ENCODE measurements at regions of chr15 and their contacts with region 1.

Region 1: DNA sequence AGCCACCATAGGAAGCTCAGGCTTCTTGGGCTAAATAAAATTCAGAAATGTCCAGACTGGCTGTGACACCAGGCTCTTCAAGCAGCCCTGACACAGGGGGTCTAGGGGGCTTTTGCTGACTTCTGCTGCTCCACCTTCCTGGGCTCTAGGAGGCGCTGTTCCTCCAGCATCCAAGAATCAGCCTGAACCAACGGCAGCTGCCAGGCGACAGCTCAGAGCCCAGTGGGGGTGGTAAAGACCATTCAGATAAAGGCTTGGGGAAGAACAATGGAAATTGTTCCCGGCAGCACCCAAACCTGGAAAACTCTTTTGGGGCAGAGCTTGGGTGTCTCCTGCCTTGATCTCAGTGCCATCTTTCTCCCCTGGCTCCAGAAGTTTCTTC is 21.6 kb upstream of the PSTPIP1 start:
- DNase-seq: peak; percentile 86
- ATAC-seq: peak; percentile 81
- H3K4me3 Mint-ChIP-seq: no peak overlapping the region
- H3K27ac Mint-ChIP-seq: no peak overlapping the region
- H3K4me1 Mint-ChIP-seq: peaks cover 17% of the 10 kb centered on the region
- H3K27me3 Mint-ChIP-seq: no peaks in the 10 kb centered on the region

Region 2: GRCh38 chr15:76941636-76942035 is 31.7 kb before region 1 on chr15:
- CTCF ChIA-PET with region 1: interaction called, 14 read pairs
- POLR2A ChIA-PET with region 1: no interaction called
- intact Hi-C with region 1: no loop called
- DNase-seq: no peak
- ATAC-seq: no peak
- H3K4me3 Mint-ChIP-seq: no peak overlapping the region
- H3K27ac Mint-ChIP-seq: no peak overlapping the region
- H3K4me1 Mint-ChIP-seq: peaks cover 8% of the 10 kb centered on the region
- H3K27me3 Mint-ChIP-seq: no peaks in the 10 kb centered on the region

Region 3: DNA sequence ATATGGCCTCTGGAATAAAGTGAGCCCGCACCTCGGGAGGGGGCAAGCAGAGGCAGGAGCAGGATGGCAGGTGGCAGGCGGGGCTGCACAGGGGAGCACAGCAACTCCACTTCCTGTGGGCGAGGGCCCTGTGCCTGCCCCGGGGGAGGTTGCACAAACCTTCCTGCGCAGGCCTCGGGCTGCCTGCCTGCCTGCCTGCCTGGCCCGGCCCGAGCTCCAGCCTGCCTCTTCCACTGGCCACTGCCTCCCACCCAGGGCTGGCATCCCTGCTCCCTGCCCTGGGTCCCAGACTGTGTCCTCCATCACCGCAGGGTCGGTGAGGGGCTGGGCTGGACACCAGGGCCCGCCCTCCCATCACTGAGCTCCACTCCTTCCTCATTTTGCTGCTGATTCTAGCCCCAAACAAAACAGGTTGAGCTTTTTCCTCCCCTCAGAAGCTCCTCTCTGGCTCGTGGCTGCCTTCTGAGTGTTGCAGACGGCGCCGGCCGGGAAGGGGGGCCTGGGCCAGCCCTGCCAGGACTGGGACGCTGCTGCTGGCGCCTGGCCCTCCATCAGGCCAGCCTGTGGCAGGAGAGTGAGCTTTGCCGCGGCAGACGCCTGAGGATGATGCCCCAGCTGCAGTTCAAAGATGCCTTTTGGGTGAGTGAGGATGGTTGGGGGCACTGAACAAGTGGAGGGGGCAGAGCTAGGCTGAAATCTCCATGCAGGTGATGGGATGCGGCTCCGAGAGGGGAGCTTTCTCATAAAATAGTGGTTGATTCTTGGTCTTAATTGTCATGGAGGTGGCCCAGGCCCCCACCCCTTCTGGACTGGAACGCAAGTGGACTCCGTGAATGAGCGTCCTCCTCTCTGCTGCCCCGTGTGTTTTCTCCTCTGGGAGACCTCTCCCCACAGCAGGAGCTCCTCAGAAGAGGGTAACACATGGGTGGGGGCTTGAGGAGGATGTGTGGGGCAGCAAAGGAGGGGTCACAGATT is 21.9 kb after region 1 on chr15 and contains the start of gene PSTPIP1:
- CTCF ChIA-PET with region 1: interaction called, 33 read pairs
- POLR2A ChIA-PET with region 1: no interaction called
- intact Hi-C with region 1: loop called in 1 of 2 experiments (anchors 1 kb)
- DNase-seq: peak; percentile 87
- ATAC-seq: peak; percentile 62
- H3K4me3 Mint-ChIP-seq: peak within 1 kb of the TSS; percentile 97
- H3K27ac Mint-ChIP-seq: peak within 1 kb of the TSS; percentile 96
- H3K4me1 Mint-ChIP-seq: peaks cover 57% of the 10 kb centered on the region
- H3K27me3 Mint-ChIP-seq: no peaks in the 10 kb centered on the region
- total RNA-seq, gene PSTPIP1: 100 to 125 TPM

Region 4: DNA sequence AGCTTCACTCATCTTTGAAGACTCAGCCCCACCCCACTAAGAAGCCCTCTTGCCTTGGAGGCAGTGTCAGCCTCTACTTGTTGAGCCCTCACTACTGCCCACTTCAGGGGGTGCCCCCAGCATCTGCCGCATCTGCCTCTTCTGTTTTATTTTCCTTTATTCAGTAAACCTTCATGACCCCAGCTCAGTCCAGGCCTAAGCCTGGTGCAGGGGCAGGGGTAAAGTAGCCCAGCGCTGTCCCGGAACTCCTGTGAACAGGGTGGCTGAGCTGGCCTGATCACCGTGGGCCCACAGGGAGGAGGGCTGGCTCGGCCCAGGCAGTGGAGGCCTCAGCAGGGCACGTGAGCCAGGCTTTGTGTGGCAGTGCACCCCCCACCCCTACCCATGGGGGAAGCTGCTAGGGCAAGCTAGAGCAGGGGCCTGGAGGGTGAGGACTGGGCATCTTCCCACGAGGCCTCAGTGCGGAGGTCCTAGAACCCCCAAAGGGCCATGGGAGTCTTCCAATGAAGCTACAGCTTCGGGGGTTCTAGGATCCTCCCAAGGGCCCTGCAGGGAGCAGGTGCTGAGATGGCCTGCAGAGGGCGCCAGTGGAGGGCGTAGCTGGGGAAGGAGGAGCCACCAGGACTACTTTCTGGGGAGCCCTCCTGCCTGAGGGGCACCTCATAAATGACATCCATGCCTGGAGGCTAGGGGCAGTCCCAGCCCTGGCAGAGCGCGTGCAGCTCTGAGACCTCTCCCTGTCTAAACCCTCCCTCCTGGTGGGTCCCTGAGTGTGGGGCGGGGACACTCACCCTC is 61.5 kb after region 1 on chr15:
- CTCF ChIA-PET with region 1: interaction called, 44 read pairs
- POLR2A ChIA-PET with region 1: no interaction called
- intact Hi-C with region 1: loop called in 1 of 2 experiments (anchors 1 kb)
- DNase-seq: peak; percentile 80
- ATAC-seq: peak; percentile 61
- H3K4me3 Mint-ChIP-seq: no peak overlapping the region
- H3K27ac Mint-ChIP-seq: no peak overlapping the region
- H3K4me1 Mint-ChIP-seq: no peaks in the 10 kb centered on the region
- H3K27me3 Mint-ChIP-seq: no peaks in the 10 kb centered on the region

Region 5: GRCh38 chr15:77118882-77119321 is 145.5 kb after region 1 on chr15:
- CTCF ChIA-PET with region 1: interaction called, 6 read pairs
- POLR2A ChIA-PET with region 1: no interaction called
- intact Hi-C with region 1: loop called in 1 of 2 experiments (anchors 1 kb)
- DNase-seq: peak; percentile 39
- ATAC-seq: peak; percentile 47
- H3K4me3 Mint-ChIP-seq: no peak overlapping the region
- H3K27ac Mint-ChIP-seq: no peak overlapping the region
- H3K4me1 Mint-ChIP-seq: peaks cover 7% of the 10 kb centered on the region
- H3K27me3 Mint-ChIP-seq: no peaks in the 10 kb centered on the region

Region 6: DNA sequence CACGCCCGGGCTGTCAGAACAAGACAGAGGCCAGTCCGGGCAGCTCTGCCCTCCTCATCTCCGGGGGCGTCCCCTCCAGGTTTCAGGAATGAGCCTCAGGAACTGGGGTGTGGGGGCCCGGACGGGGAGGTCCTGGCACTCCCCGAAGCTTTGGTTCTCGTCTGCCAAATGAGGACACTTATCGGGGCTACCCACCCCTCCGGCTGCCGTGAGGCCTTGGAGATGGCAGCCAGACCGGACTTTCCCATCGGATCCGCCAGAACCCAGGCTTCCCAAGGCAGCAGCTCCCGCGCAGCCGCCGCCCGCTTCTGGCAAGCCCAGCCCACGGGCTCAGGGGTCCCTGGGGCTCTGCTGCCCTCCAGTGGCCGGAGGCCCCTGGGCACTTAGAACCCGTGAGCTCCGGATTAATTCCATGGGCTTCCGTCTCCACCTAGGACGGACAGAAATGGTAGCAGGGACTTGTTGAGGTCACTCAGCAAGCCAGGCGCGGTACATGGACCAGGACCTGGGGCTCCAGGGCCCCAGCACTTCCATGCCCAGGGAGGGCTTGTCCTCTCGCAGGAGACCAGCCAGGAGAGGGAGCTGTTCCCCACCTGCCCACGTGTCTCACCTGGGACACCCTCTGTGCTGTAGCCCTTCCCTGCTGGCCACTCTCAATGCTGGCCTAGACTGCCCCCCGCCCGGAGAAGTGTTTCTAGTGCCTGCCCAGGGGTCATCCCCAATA is 570.0 kb after region 1 on chr15:
- CTCF ChIA-PET with region 1: interaction called, 10 read pairs
- POLR2A ChIA-PET with region 1: no interaction called
- intact Hi-C with region 1: loop called in 1 of 2 experiments (anchors 1 kb)
- DNase-seq: peak; percentile 89
- ATAC-seq: peak; percentile 95
- H3K4me3 Mint-ChIP-seq: peak overlapping the region; percentile 66
- H3K27ac Mint-ChIP-seq: peak overlapping the region; percentile 66
- H3K4me1 Mint-ChIP-seq: peaks cover 4% of the 10 kb centered on the region
- H3K27me3 Mint-ChIP-seq: no peaks in the 10 kb centered on the region

Region 7: GRCh38 chr15:77720655-77721054 is 747.3 kb after region 1 on chr15:
- CTCF ChIA-PET with region 1: no interaction called
- POLR2A ChIA-PET with region 1: no interaction called
- intact Hi-C with region 1: no loop called
- DNase-seq: no peak
- ATAC-seq: no peak
- H3K4me3 Mint-ChIP-seq: no peak overlapping the region
- H3K27ac Mint-ChIP-seq: no peak overlapping the region
- H3K4me1 Mint-ChIP-seq: no peaks in the 10 kb centered on the region
- H3K27me3 Mint-ChIP-seq: peaks cover 14% of the 10 kb centered on the region